Psoas muscle (tissue), 8 donors: ENCODE measurements at regions of chr6 and their contacts with region 1.

Region 1: GRCh38 chr6:72876256-72876655 is 254.4 kb downstream of the KCNQ5 start:
- DNase-seq: no peak
- ATAC-seq: no peak
- H3K4me3 ChIP-seq: no peak overlapping the region
- H3K27ac ChIP-seq: no peak overlapping the region
- H3K4me1 ChIP-seq: peaks cover 31% of the 10 kb centered on the region
- H3K27me3 ChIP-seq: no peaks in the 10 kb centered on the region
- CTCF ChIP-seq: no peak

Region 2: GRCh38 chr6:72922401-72922800 is 46.1 kb after region 1 on chr6:
- intact Hi-C with region 1: loop called in 1 of 2 experiments (anchors 5 kb)
- DNase-seq: no peak
- ATAC-seq: no peak
- H3K4me3 ChIP-seq: no peak overlapping the region
- H3K27ac ChIP-seq: no peak overlapping the region
- H3K4me1 ChIP-seq: peaks cover 8% of the 10 kb centered on the region
- H3K27me3 ChIP-seq: no peaks in the 10 kb centered on the region
- CTCF ChIP-seq: no peak

Region 3: GRCh38 chr6:73604020-73604419 is 727.8 kb after region 1 on chr6:
- intact Hi-C with region 1: loop called in 1 of 2 experiments (anchors 5 kb)
- DNase-seq: no peak
- ATAC-seq: peak; percentile 59 to 85 (median 76)
- H3K4me3 ChIP-seq: no peak overlapping the region
- H3K27ac ChIP-seq: no peak overlapping the region
- H3K4me1 ChIP-seq: peaks cover 8% of the 10 kb centered on the region
- H3K27me3 ChIP-seq: no peaks in the 10 kb centered on the region
- CTCF ChIP-seq: no peak